ENCODE measurements at regions of chr9 and their contacts with region 1.

Region 1: GRCh38 chr9:110058304-110058953 is 149.5 kb downstream of the C9orf152 start:
- DNase-seq: peak in 2 of 5 donors; percentile 14 to 54
- H3K4me3 ChIP-seq: no peak overlapping the region
- H3K4me3 Mint-ChIP-seq: no peak overlapping the region
- H3K27ac ChIP-seq: no peak overlapping the region
- H3K27ac Mint-ChIP-seq: peak overlapping the region in 1 of 8 donors; percentile 3
- H3K4me1 ChIP-seq: no peaks in the 10 kb centered on the region
- H3K4me1 Mint-ChIP-seq: no peaks in the 10 kb centered on the region
- H3K27me3 ChIP-seq: no peaks in the 10 kb centered on the region
- H3K27me3 Mint-ChIP-seq: peaks cover 0 to 9% of the 10 kb centered on the region in 2 donors

Region 2: GRCh38 chr9:109751253-109751652 is 307.2 kb before region 1 on chr9:
- CTCF ChIA-PET with region 1: no interaction called
- POLR2A ChIA-PET with region 1: no interaction called
- DNase-seq: no peak
- H3K4me3 ChIP-seq: no peak overlapping the region
- H3K4me3 Mint-ChIP-seq: no peak overlapping the region
- H3K27ac ChIP-seq: no peak overlapping the region
- H3K27ac Mint-ChIP-seq: peak overlapping the region in 1 of 8 donors; percentile 43
- H3K4me1 ChIP-seq: no peaks in the 10 kb centered on the region
- H3K4me1 Mint-ChIP-seq: no peaks in the 10 kb centered on the region
- H3K27me3 ChIP-seq: no peaks in the 10 kb centered on the region
- H3K27me3 Mint-ChIP-seq: peaks cover 0 to 2% of the 10 kb centered on the region in 2 donors

Region 3: DNA sequence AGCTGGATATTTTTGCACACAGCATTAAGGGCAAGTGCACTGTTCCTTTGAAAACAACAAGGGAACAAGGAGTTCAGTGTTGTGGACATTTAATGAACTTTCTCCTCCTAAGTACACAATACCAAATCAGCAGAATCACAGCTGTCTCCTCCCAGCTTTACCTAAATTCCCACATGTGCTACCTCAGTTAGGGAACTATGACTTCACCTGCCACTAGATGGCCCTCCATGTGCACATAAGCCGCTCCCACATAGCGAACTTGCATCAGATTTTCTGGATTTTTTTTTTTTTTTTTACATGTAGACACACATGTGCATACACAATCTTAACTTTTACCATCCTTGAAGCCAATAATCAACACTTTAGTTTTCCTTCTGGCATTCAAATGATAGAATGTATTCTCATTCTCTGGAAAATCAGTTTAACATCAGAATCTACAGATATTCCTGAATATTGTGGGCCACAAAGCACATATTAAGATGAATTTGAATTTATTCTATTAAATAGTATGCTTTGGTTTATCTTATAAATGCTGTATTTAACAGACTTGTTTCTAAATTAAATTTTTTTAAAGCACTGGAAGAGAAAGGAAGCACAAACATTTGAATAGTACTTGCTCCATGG is 154.8 kb before region 1 on chr9:
- CTCF ChIA-PET with region 1: interaction called, 25 read pairs
- POLR2A ChIA-PET with region 1: no interaction called
- DNase-seq: peak; percentile 5 to 52 (median 14)
- H3K4me3 ChIP-seq: no peak overlapping the region
- H3K4me3 Mint-ChIP-seq: no peak overlapping the region
- H3K27ac ChIP-seq: no peak overlapping the region
- H3K27ac Mint-ChIP-seq: no peak overlapping the region
- H3K4me1 ChIP-seq: no peaks in the 10 kb centered on the region
- H3K4me1 Mint-ChIP-seq: no peaks in the 10 kb centered on the region
- H3K27me3 ChIP-seq: no peaks in the 10 kb centered on the region
- H3K27me3 Mint-ChIP-seq: peaks cover 0 to 8% of the 10 kb centered on the region in 2 donors

Region 4: DNA sequence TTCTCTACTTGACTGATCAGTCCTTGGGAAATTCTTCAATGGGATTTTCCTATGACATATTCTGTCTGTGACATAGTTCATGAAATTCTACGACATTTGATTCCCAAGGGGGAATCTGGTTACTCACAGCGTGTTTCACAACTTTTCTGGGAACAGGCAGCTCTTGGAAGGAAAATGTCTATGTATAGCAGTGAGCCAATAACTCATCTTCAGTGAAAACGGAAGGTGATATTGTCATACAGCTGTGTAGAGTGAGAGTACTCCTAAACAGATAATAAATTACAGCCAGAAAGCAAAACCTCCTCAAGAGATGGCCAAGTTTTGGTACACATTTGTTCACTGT is 58.1 kb after region 1 on chr9:
- CTCF ChIA-PET with region 1: no interaction called
- POLR2A ChIA-PET with region 1: no interaction called
- DNase-seq: no peak
- H3K4me3 ChIP-seq: no peak overlapping the region
- H3K4me3 Mint-ChIP-seq: no peak overlapping the region
- H3K27ac ChIP-seq: no peak overlapping the region
- H3K27ac Mint-ChIP-seq: no peak overlapping the region
- H3K4me1 ChIP-seq: no peaks in the 10 kb centered on the region
- H3K4me1 Mint-ChIP-seq: no peaks in the 10 kb centered on the region
- H3K27me3 ChIP-seq: no peaks in the 10 kb centered on the region
- H3K27me3 Mint-ChIP-seq: peaks cover 0 to 11% of the 10 kb centered on the region in 2 donors

Measured in CD8-positive, alpha-beta memory T cell (primary cell).